ENCODE measurements at regions of chr2 and their contacts with region 1.

Region 1: GRCh38 chr2:85327822-85328617 is at the start of gene TGOLN2:
- DNase-seq: peak; percentile 97
- ATAC-seq: peak; percentile 90
- H3K4me3 ChIP-seq: peak within 1 kb of the TSS; percentile 44 to 96 (median 86)
- H3K4me3 Mint-ChIP-seq: peak within 1 kb of the TSS; percentile 100
- H3K27ac ChIP-seq: peak within 1 kb of the TSS; percentile 83 to 99
- H3K27ac Mint-ChIP-seq: peak within 1 kb of the TSS; percentile 100
- H3K4me1 ChIP-seq: peaks cover 34 to 42% of the 10 kb centered on the region in 2 donors
- H3K4me1 Mint-ChIP-seq: peaks cover 59% of the 10 kb centered on the region
- H3K27me3 ChIP-seq: no peaks in the 10 kb centered on the region
- H3K27me3 Mint-ChIP-seq: no peaks in the 10 kb centered on the region
- CTCF ChIP-seq: no peak
- total RNA-seq, gene TGOLN2: 172 and 181 TPM in 2 replicates

Region 2: DNA sequence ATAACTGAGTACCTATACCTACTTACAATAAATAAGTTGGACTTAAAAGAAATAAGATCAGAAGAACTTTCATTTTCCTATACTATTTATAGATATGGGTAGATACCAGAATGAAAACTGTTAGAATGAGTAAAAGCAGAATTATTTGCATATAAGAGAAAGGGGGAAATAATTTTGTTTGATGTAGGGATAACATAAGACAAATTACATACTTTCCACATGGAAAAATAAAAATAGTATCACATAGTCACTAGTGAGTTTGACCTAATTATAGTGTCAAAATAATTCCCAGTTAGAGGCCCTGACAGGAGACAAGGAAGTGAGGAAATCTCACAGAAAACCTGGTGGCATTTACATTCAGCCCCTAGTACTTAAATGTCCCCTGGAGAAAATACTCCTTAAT is 328.5 kb before region 1 on chr2:
- CTCF ChIA-PET with region 1: no interaction called
- POLR2A ChIA-PET with region 1: no interaction called
- intact Hi-C with region 1: no loop called
- DNase-seq: no peak
- ATAC-seq: no peak
- H3K4me3 ChIP-seq: peak overlapping the region in 2 of 5 experiments; percentile 18 to 35
- H3K4me3 Mint-ChIP-seq: peak overlapping the region; percentile 44
- H3K27ac ChIP-seq: peak overlapping the region in 1 of 2 donors; percentile 63
- H3K27ac Mint-ChIP-seq: peak overlapping the region; percentile 39
- H3K4me1 ChIP-seq: peaks cover 21 to 28% of the 10 kb centered on the region in 2 donors
- H3K4me1 Mint-ChIP-seq: peaks cover 57% of the 10 kb centered on the region
- H3K27me3 ChIP-seq: no peaks in the 10 kb centered on the region
- H3K27me3 Mint-ChIP-seq: no peaks in the 10 kb centered on the region
- CTCF ChIP-seq: no peak

Region 3: DNA sequence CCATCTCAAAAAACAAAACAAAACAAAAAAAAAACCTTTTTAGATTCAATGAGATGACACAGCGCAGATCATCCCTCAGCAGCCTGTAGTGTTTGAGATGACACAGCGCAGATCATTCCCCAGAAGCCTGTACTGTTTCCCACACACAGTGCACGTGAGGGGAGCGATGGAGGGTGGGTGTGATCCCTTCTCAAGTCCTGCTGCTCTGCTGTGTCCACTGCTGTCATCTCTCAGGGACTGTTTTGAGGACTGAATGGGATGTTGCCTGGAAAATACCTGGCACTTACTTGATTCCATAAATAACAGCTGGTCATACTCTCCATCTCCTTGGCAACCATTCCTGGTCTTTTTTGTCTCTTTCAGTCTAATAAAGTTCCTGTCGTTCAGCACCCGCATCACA is 25.9 kb before region 1 on chr2:
- CTCF ChIA-PET with region 1: interaction called, 11 read pairs
- POLR2A ChIA-PET with region 1: interaction called, 4 read pairs
- intact Hi-C with region 1: no loop called
- DNase-seq: no peak
- ATAC-seq: no peak
- H3K4me3 ChIP-seq: no peak overlapping the region
- H3K4me3 Mint-ChIP-seq: no peak overlapping the region
- H3K27ac ChIP-seq: no peak overlapping the region
- H3K27ac Mint-ChIP-seq: no peak overlapping the region
- H3K4me1 ChIP-seq: peaks cover 0 to 3% of the 10 kb centered on the region in 2 donors
- H3K4me1 Mint-ChIP-seq: peaks cover 8% of the 10 kb centered on the region
- H3K27me3 ChIP-seq: peaks cover 0 to 14% (median 3%) of the 10 kb centered on the region in 4 experiments
- H3K27me3 Mint-ChIP-seq: peaks cover 29% of the 10 kb centered on the region
- CTCF ChIP-seq: no peak

Region 4: DNA sequence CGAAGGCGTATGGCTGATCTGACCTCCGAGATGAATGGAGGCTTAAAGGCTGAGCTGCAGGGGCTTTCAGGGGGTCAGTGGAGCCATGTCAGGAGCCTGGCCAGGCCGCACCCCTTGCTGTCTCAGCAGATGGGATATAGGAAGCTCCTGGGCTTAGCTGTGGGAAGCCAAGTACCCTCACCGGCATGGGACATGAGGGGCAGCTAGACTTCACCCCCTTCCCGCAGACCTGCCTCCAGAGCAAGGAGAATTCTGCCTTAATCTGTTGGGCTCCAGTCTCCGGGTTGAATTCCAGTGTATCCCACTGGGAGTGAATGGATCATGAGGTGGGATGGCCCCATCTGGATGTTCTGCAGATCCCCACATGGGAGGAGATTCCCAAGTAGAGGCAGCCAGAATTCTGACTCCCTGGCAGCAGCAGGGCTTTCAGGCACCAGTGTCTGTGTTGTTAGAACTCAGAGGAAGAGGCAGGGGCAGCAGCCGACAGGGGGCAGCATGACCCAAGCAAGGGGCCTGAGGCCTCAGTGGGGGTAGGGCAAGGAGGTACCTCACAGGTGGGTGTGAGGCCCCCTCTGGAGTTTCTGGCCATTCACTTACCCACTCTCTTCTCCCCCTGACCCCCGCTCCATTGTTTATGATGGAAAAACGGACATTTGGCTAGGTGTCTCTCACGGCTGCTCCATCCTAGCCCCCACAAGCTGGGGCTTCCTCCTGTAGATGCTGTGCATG is 63.1 kb after region 1 on chr2:
- CTCF ChIA-PET with region 1: no interaction called
- POLR2A ChIA-PET with region 1: interaction called, 5 read pairs
- intact Hi-C with region 1: loop called (anchors 5 kb)
- DNase-seq: peak; percentile 80
- ATAC-seq: peak; percentile 25
- H3K4me3 ChIP-seq: no peak overlapping the region
- H3K4me3 Mint-ChIP-seq: peak overlapping the region; percentile 15
- H3K27ac ChIP-seq: peak overlapping the region; percentile 68 to 81
- H3K27ac Mint-ChIP-seq: peak overlapping the region; percentile 71
- H3K4me1 ChIP-seq: peaks cover 25 to 26% of the 10 kb centered on the region in 2 donors
- H3K4me1 Mint-ChIP-seq: peaks cover 31% of the 10 kb centered on the region
- H3K27me3 ChIP-seq: no peaks in the 10 kb centered on the region
- H3K27me3 Mint-ChIP-seq: no peaks in the 10 kb centered on the region
- CTCF ChIP-seq: peak; percentile 81

Region 5: GRCh38 chr2:85437488-85438284 is 109.7 kb after region 1 on chr2:
- CTCF ChIA-PET with region 1: no interaction called
- POLR2A ChIA-PET with region 1: interaction called, 14 read pairs
- intact Hi-C with region 1: loop called (anchors 1 kb)
- DNase-seq: peak; percentile 92
- ATAC-seq: peak; percentile 87
- H3K4me3 ChIP-seq: peak overlapping the region in 4 of 5 experiments; percentile 41 to 65 (median 58)
- H3K4me3 Mint-ChIP-seq: peak overlapping the region; percentile 91
- H3K27ac ChIP-seq: peak overlapping the region; percentile 74 to 86
- H3K27ac Mint-ChIP-seq: peak overlapping the region; percentile 98
- H3K4me1 ChIP-seq: peaks cover 30 to 40% of the 10 kb centered on the region in 2 donors
- H3K4me1 Mint-ChIP-seq: peaks cover 38% of the 10 kb centered on the region
- H3K27me3 ChIP-seq: peaks cover 0 to 2% (median 0%) of the 10 kb centered on the region in 4 experiments
- H3K27me3 Mint-ChIP-seq: no peaks in the 10 kb centered on the region
- CTCF ChIP-seq: no peak

Region 6: DNA sequence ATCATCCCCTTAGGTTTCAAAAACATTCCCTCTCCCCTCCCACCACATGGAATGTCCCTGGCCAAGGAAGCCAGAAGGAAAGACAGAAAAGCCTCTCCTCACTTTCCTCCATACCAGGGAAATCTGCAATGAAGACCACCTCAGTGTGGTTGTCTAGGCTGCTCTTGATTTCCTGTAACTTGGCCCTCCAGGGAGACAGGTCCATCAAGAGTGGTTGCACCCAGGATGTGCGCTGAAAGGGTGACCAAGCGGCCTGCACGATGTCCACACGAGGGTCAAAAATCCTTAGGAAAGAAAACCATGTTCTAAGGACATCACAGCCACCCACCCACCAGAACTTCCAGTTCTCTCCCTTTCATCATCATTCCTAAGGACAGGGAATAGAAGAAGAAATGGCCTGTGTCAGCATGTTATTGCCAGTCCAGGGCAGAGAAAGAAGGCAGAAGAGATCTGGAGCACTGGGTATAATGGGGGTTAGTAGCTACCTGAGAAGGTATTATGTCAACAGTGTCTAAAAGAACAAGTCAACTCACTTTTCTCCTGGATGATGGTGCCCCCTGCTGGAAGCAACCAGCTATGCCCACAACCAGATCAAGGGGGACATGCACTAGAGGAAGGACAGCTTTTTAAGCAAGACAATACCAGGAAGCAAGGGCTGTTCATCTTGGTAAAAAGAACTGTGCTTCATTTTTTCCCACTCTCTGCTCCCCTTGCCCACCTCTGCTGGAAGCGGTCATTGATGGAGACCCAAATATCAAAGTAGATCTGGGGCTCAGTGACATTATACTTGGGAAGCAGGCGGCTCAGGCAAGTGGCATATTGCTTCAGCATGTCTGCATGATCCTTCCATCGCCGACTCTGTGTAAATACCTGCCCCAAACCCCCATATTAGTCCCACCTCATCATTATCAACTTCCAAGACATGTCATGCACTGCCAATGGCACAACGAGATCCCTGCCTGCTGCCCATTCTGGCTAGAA is 224.0 kb after region 1 on chr2:
- CTCF ChIA-PET with region 1: interaction called, 8 read pairs
- POLR2A ChIA-PET with region 1: interaction called, 3 read pairs
- intact Hi-C with region 1: loop called (anchors 2 kb)
- DNase-seq: peak; percentile 90
- ATAC-seq: peak; percentile 97
- H3K4me3 ChIP-seq: no peak overlapping the region
- H3K4me3 Mint-ChIP-seq: no peak overlapping the region
- H3K27ac ChIP-seq: no peak overlapping the region
- H3K27ac Mint-ChIP-seq: peak overlapping the region; percentile 81
- H3K4me1 ChIP-seq: peaks cover 0 to 3% of the 10 kb centered on the region in 2 donors
- H3K4me1 Mint-ChIP-seq: peaks cover 4% of the 10 kb centered on the region
- H3K27me3 ChIP-seq: no peaks in the 10 kb centered on the region
- H3K27me3 Mint-ChIP-seq: no peaks in the 10 kb centered on the region
- CTCF ChIP-seq: peak; percentile 91

Region 7: GRCh38 chr2:86017901-86018896 is 690.2 kb after region 1 on chr2:
- CTCF ChIA-PET with region 1: no interaction called
- POLR2A ChIA-PET with region 1: no interaction called
- intact Hi-C with region 1: no loop called
- DNase-seq: peak; percentile 37
- ATAC-seq: no peak
- H3K4me3 ChIP-seq: no peak overlapping the region
- H3K4me3 Mint-ChIP-seq: peak overlapping the region; percentile 29
- H3K27ac ChIP-seq: peak overlapping the region; percentile 80 to 87
- H3K27ac Mint-ChIP-seq: peak overlapping the region; percentile 92
- H3K4me1 ChIP-seq: peaks cover 49 to 53% of the 10 kb centered on the region in 2 donors
- H3K4me1 Mint-ChIP-seq: peaks cover 69% of the 10 kb centered on the region
- H3K27me3 ChIP-seq: no peaks in the 10 kb centered on the region
- H3K27me3 Mint-ChIP-seq: no peaks in the 10 kb centered on the region
- CTCF ChIP-seq: no peak